Thyroid gland (tissue), 4 donors: ENCODE measurements at regions of chr2 and their contacts with region 1.

Region 1: GRCh38 chr2:75787532-75788132 is 76.9 kb upstream of the GCFC2 start:
- DNase-seq: no peak
- H3K4me3 ChIP-seq: no peak overlapping the region
- H3K27ac ChIP-seq: no peak overlapping the region
- H3K4me1 ChIP-seq: no peaks in the 10 kb centered on the region
- H3K27me3 ChIP-seq: no peaks in the 10 kb centered on the region
- CTCF ChIP-seq: peak in 3 of 6 experiments; percentile 49 to 54 (median 52)
- POLR2A ChIP-seq: no peak

Region 2: GRCh38 chr2:75336451-75336850 is 451.2 kb before region 1 on chr2:
- intact Hi-C with region 1: no loop called
- DNase-seq: no peak
- H3K4me3 ChIP-seq: no peak overlapping the region
- H3K27ac ChIP-seq: no peak overlapping the region
- H3K4me1 ChIP-seq: no peaks in the 10 kb centered on the region
- H3K27me3 ChIP-seq: no peaks in the 10 kb centered on the region
- CTCF ChIP-seq: no peak
- POLR2A ChIP-seq: no peak

Region 3: GRCh38 chr2:75882530-75882929 is 94.9 kb after region 1 on chr2:
- intact Hi-C with region 1: no loop called
- DNase-seq: no peak
- H3K4me3 ChIP-seq: no peak overlapping the region
- H3K27ac ChIP-seq: no peak overlapping the region
- H3K4me1 ChIP-seq: no peaks in the 10 kb centered on the region
- H3K27me3 ChIP-seq: no peaks in the 10 kb centered on the region
- CTCF ChIP-seq: no peak
- POLR2A ChIP-seq: no peak

Region 4: DNA sequence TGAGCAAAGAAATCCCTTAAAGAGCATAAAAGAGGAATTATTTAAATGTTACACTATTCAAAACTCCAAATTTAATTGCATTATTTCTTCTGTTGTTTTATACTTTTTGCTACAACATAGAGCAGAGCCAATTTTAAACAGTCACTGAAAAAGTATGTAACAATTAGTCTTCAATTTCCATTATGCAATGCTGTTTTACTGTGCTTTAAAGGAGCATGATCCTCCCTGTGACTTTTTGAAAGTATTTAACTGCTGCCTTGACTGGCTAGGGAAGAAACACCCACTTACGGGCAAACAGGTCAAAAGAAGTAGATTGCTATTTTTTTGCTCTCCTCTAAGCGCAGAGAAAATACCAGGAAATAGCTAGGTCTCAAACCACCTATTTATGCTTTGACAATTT is 140.5 kb after region 1 on chr2:
- intact Hi-C with region 1: no loop called
- DNase-seq: no peak
- H3K4me3 ChIP-seq: no peak overlapping the region
- H3K27ac ChIP-seq: no peak overlapping the region
- H3K4me1 ChIP-seq: no peaks in the 10 kb centered on the region
- H3K27me3 ChIP-seq: no peaks in the 10 kb centered on the region
- CTCF ChIP-seq: no peak
- POLR2A ChIP-seq: no peak

Region 5: DNA sequence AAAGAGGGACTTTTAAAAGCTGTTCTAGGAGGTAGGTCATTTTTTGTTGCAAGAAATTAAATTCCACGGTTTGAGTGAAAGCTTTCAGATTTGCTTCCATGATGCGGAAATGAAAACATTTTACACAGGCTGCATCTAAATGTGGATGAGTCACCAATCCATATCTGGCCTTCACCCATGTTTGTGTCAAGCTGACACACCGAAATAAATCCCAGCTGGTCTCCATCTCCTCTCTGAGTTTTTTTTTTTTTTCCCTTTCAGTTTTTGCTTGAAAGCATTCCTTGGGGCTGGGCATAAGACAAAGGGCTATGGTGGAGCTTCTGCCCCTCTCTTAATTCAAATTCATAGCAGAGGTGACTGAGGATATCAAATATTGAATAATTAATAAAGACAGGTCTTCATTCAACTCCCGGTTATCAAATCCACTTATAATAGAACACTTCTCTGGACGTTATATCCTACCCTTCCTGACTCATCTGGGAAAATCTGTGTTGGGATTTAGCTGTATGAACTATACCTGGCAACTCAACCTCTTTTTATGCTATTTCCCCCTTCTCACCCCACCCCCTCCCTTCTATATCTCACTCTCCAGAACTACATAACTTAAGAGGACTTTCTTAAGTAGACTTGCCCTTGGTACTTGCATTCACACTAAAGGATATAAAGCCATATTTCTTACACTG is 481.4 kb after region 1 on chr2:
- intact Hi-C with region 1: no loop called
- DNase-seq: no peak
- H3K4me3 ChIP-seq: no peak overlapping the region
- H3K27ac ChIP-seq: no peak overlapping the region
- H3K4me1 ChIP-seq: no peaks in the 10 kb centered on the region
- H3K27me3 ChIP-seq: no peaks in the 10 kb centered on the region
- CTCF ChIP-seq: no peak
- POLR2A ChIP-seq: no peak

Region 6: DNA sequence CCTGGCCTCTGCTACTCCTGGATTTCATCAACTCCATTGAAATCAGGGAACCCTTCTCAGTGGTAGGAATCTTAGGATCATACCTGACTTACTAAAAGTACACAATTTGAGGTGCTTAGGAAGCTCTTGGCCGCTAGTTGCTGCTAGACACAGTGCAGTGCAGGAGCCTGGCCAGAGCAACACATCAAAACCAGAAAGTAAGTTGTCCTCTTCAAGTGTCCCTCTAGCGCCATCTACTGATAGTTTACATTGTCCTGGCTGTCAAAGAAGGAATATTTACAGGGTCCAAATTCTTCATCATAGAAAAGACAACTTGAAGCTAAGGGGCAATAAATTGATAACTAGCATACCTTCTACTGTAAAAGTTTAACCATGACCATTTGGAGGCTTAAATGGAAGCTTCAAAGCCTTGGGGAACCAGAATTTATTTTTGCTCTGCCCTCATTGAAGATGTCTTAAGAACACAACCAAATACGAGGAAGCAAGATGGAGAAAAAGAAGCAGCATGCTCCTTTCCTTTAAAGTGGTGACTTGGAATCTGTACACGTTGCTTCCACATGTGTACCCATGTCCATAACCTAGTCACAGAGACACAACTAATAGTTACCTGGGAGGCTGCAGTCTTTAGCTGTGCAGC is 812.2 kb after region 1 on chr2:
- intact Hi-C with region 1: loop called (anchors 10 kb)
- DNase-seq: peak; percentile 54 to 64
- H3K4me3 ChIP-seq: no peak overlapping the region
- H3K27ac ChIP-seq: no peak overlapping the region
- H3K4me1 ChIP-seq: no peaks in the 10 kb centered on the region
- H3K27me3 ChIP-seq: no peaks in the 10 kb centered on the region
- CTCF ChIP-seq: peak; percentile 29 to 70 (median 48)
- POLR2A ChIP-seq: no peak